Activated CD8-positive, alpha-beta T cell treated with anti-CD3 and anti-CD28 coated beads for 36 hours (primary cell): ENCODE measurements at regions of chr22 and their contacts with region 1.

Region 1: GRCh38 chr22:24423519-24424000 is 3.8 kb upstream of the ADORA2A start:
- DNase-seq: peak; percentile 66
- ATAC-seq: peak; percentile 17
- H3K4me3 Mint-ChIP-seq: peak overlapping the region; percentile 93
- H3K27ac Mint-ChIP-seq: peak overlapping the region; percentile 52
- H3K4me1 Mint-ChIP-seq: peaks cover 26% of the 10 kb centered on the region
- H3K27me3 Mint-ChIP-seq: peaks cover 3% of the 10 kb centered on the region
- CTCF ChIP-seq: peak; percentile 93

Region 2: GRCh38 chr22:24433813-24434470 is 10.4 kb after region 1 on chr22:
- CTCF ChIA-PET with region 1: interaction called, 51 read pairs
- POLR2A ChIA-PET with region 1: interaction called, 12 read pairs
- intact Hi-C with region 1: no loop called
- DNase-seq: no peak
- ATAC-seq: peak; percentile 75
- H3K4me3 Mint-ChIP-seq: peak overlapping the region; percentile 75
- H3K27ac Mint-ChIP-seq: peak overlapping the region; percentile 98
- H3K4me1 Mint-ChIP-seq: peaks cover 91% of the 10 kb centered on the region
- H3K27me3 Mint-ChIP-seq: no peaks in the 10 kb centered on the region
- CTCF ChIP-seq: no peak

Region 3: DNA sequence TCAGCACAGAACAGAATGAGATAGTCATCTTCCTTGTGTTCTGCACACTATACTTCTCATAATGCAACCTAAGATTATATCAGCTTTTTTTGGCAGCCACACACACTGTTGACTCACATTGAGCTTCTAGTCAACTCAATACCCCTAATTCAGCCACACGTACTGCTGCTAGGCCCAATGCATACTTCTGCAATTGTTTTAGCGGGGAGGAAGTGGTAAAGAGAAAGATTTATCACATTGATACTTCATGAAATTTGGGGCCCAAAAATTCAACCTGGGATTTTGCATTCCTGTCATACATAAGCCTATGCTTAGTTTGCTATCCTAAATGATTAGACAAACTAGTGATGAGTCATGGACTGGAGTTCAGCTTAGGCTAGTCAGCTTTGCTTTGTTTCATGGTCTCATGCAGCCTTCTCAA is 63.0 kb after region 1 on chr22:
- CTCF ChIA-PET with region 1: interaction called, 11 read pairs
- POLR2A ChIA-PET with region 1: interaction called, 5 read pairs
- intact Hi-C with region 1: no loop called
- DNase-seq: peak; percentile 40
- ATAC-seq: peak; percentile 92
- H3K4me3 Mint-ChIP-seq: no peak overlapping the region
- H3K27ac Mint-ChIP-seq: no peak overlapping the region
- H3K4me1 Mint-ChIP-seq: peaks cover 17% of the 10 kb centered on the region
- H3K27me3 Mint-ChIP-seq: no peaks in the 10 kb centered on the region
- CTCF ChIP-seq: no peak

Region 4: DNA sequence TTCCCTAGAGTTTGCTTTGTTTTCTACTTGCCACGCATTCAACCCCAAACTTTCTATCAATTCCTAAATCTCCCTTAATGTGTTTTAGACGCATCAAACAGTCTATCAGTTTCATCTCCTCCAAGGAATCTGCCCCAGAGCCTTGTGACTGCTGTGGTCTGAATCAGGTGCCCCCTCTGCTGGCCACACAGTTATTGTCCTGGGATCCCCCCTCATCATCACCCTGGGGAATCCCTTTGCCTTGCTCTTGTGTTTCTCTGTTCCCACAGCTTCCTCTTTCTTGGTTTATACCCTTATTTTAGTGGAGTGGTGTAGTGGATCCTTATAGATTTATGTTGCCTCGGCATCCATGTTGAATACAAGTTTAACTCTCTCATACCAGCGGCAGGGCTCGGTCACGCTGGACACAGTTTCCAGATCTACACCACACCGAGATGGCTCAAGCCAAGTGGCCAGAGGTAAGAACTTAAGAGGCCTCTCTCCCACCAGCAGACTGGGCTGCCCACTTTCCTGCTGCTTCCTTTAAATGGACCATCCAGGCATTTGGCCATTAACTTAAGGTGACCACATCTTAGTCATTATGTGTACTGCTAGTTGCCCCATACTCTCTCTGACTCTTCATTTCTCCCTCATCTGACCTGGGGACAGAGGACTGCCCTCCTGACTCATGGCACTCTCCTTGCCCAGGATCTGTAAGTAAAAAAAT is 79.7 kb after region 1 on chr22:
- CTCF ChIA-PET with region 1: interaction called, 46 read pairs
- POLR2A ChIA-PET with region 1: interaction called, 4 read pairs
- intact Hi-C with region 1: loop called (anchors 5 kb)
- DNase-seq: peak; percentile 84
- ATAC-seq: peak; percentile 93
- H3K4me3 Mint-ChIP-seq: no peak overlapping the region
- H3K27ac Mint-ChIP-seq: no peak overlapping the region
- H3K4me1 Mint-ChIP-seq: peaks cover 11% of the 10 kb centered on the region
- H3K27me3 Mint-ChIP-seq: no peaks in the 10 kb centered on the region
- CTCF ChIP-seq: peak; percentile 75

Region 5: DNA sequence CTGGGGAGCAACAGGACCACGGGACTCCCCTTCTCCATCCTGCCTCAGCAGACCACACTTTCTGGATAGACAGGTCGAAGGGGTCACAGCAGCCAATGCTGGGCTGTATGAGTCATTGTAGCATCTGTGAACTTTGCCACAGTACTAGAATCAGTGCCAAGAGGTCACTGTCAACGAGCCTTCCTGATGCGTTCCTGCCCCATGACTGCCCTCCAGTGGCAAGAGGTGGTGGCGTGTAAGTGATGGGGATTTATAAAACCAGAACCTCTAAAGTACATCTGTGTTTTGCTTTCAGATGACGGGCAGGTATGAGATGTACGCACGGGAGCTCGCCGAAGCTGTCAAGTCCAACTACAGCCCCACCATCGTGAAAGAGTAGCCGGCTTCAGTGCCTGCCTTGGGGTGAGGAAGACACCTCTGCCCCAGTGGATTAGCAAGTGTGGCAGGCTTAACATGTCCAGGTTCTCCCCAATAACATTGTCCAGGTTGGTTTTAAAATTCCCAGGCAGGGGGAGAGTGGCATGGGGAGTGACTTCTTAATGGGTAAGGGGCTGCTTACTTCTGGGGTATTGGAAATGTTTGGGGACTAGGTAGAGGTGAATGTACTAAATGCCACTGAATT is 102.0 kb after region 1 on chr22:
- CTCF ChIA-PET with region 1: interaction called, 23 read pairs
- POLR2A ChIA-PET with region 1: interaction called, 4 read pairs
- intact Hi-C with region 1: loop called (anchors 5 kb)
- DNase-seq: peak; percentile 95
- ATAC-seq: peak; percentile 98
- H3K4me3 Mint-ChIP-seq: no peak overlapping the region
- H3K27ac Mint-ChIP-seq: no peak overlapping the region
- H3K4me1 Mint-ChIP-seq: peaks cover 11% of the 10 kb centered on the region
- H3K27me3 Mint-ChIP-seq: no peaks in the 10 kb centered on the region
- CTCF ChIP-seq: peak; percentile 86